ENCODE measurements at regions of chr1 and their contacts with region 1.

Region 1: GRCh38 chr1:235328357-235329138 is at the start of gene GGPS1:
- DNase-seq: peak; percentile 100
- H3K4me3 ChIP-seq: peak within 1 kb of the TSS; percentile 89 to 93 (median 92)
- H3K27ac ChIP-seq: peak within 1 kb of the TSS; percentile 86
- H3K4me1 ChIP-seq: peaks cover 28% of the 10 kb centered on the region
- H3K27me3 ChIP-seq: no peaks in the 10 kb centered on the region
- CTCF ChIP-seq: no peak
- POLR2A ChIP-seq: peak; percentile 96
- total RNA-seq, gene GGPS1: 24.8 and 29.5 TPM in 2 replicates

Region 2: GRCh38 chr1:235128456-235129328 is 199.9 kb before region 1 on chr1 and contains the start of gene TOMM20:
- CTCF ChIA-PET with region 1: no interaction called
- POLR2A ChIA-PET with region 1: no interaction called
- dilution Hi-C with region 1: no loop called
- intact Hi-C with region 1: loop called (anchors 1 kb)
- DNase-seq: peak; percentile 99
- H3K4me3 ChIP-seq: peak within 1 kb of the TSS; percentile 79 to 99 (median 93)
- H3K27ac ChIP-seq: peak within 1 kb of the TSS; percentile 70
- H3K4me1 ChIP-seq: peaks cover 12% of the 10 kb centered on the region
- H3K27me3 ChIP-seq: no peaks in the 10 kb centered on the region
- CTCF ChIP-seq: no peak
- POLR2A ChIP-seq: peak; percentile 96
- total RNA-seq, gene TOMM20: 98.4 and 108 TPM in 2 replicates

Region 3: GRCh38 chr1:235160957-235161684 is 167.4 kb before region 1 on chr1 and contains the start of gene RBM34:
- CTCF ChIA-PET with region 1: interaction called, 3 read pairs
- POLR2A ChIA-PET with region 1: no interaction called
- dilution Hi-C with region 1: no loop called
- intact Hi-C with region 1: loop called (anchors 5 kb)
- DNase-seq: peak; percentile 93
- H3K4me3 ChIP-seq: peak within 1 kb of the TSS; percentile 77 to 93 (median 86)
- H3K27ac ChIP-seq: peak within 1 kb of the TSS; percentile 66
- H3K4me1 ChIP-seq: peaks cover 4% of the 10 kb centered on the region
- H3K27me3 ChIP-seq: no peaks in the 10 kb centered on the region
- CTCF ChIP-seq: peak in 1 of 2 donors; percentile 28
- POLR2A ChIP-seq: peak; percentile 93
- total RNA-seq, gene RBM34: 78.4 and 80.7 TPM in 2 replicates

Region 4: GRCh38 chr1:235199441-235199840 is 129.1 kb before region 1 on chr1:
- CTCF ChIA-PET with region 1: interaction called, 3 read pairs
- POLR2A ChIA-PET with region 1: no interaction called
- dilution Hi-C with region 1: no loop called
- intact Hi-C with region 1: loop called (anchors 5 kb)
- DNase-seq: peak; percentile 60
- H3K4me3 ChIP-seq: no peak overlapping the region
- H3K27ac ChIP-seq: no peak overlapping the region
- H3K4me1 ChIP-seq: no peaks in the 10 kb centered on the region
- H3K27me3 ChIP-seq: no peaks in the 10 kb centered on the region
- CTCF ChIP-seq: peak; percentile 31 to 40
- POLR2A ChIP-seq: no peak

Region 5: GRCh38 chr1:235253219-235253962 is 75.2 kb before region 1 on chr1:
- CTCF ChIA-PET with region 1: interaction called, 13 read pairs
- POLR2A ChIA-PET with region 1: no interaction called
- dilution Hi-C with region 1: no loop called
- intact Hi-C with region 1: loop called (anchors 1 kb)
- DNase-seq: peak; percentile 71
- H3K4me3 ChIP-seq: no peak overlapping the region
- H3K27ac ChIP-seq: no peak overlapping the region
- H3K4me1 ChIP-seq: no peaks in the 10 kb centered on the region
- H3K27me3 ChIP-seq: no peaks in the 10 kb centered on the region
- CTCF ChIP-seq: peak; percentile 74 to 81
- POLR2A ChIP-seq: no peak

Region 6: GRCh38 chr1:235367000-235367908 is 38.7 kb after region 1 on chr1 and contains the start of gene TBCE:
- CTCF ChIA-PET with region 1: no interaction called
- POLR2A ChIA-PET with region 1: interaction called, 8 read pairs
- dilution Hi-C with region 1: no loop called
- intact Hi-C with region 1: loop called (anchors 1 kb)
- DNase-seq: peak; percentile 97
- H3K4me3 ChIP-seq: peak within 1 kb of the TSS; percentile 22 to 84 (median 81)
- H3K27ac ChIP-seq: peak within 1 kb of the TSS; percentile 4
- H3K4me1 ChIP-seq: peaks cover 2% of the 10 kb centered on the region
- H3K27me3 ChIP-seq: no peaks in the 10 kb centered on the region
- CTCF ChIP-seq: peak in 1 of 2 donors; percentile 14
- POLR2A ChIP-seq: peak; percentile 95
- total RNA-seq, gene TBCE: 28.6 and 32.6 TPM in 2 replicates

Region 7: DNA sequence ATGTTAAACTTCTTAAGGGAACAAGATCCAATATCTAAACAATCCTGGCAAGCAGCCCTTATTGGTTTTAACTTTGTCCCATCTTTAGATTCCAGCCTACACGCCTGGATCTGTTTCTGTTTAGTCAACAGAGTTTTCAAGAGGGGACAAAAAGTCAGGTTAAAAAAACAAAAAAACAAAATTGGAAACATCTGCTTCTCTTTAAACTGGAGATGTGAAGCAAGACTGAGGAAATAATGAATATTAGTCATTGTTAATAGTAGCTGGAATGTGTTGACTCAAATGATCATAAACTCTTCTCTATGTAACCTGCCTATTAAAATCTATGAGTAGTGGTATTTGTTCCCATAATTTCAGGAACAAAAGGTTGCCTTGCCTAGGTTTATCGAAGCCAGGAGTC is 681.3 kb after region 1 on chr1:
- CTCF ChIA-PET with region 1: no interaction called
- POLR2A ChIA-PET with region 1: no interaction called
- dilution Hi-C with region 1: no loop called
- intact Hi-C with region 1: loop called (anchors 10 kb)
- DNase-seq: peak; percentile 87
- H3K4me3 ChIP-seq: no peak overlapping the region
- H3K27ac ChIP-seq: peak overlapping the region; percentile 70
- H3K4me1 ChIP-seq: peaks cover 18% of the 10 kb centered on the region
- H3K27me3 ChIP-seq: no peaks in the 10 kb centered on the region
- CTCF ChIP-seq: no peak
- POLR2A ChIP-seq: no peak